ENCODE measurements at regions of chr12 and their contacts with region 1.

Region 1: GRCh38 chr12:45775964-45776363 is 46.5 kb downstream of the ARID2 start:
- DNase-seq: no peak
- H3K4me3 ChIP-seq: no peak overlapping the region
- H3K27ac ChIP-seq: no peak overlapping the region
- H3K4me1 ChIP-seq: no peaks in the 10 kb centered on the region
- CTCF ChIP-seq: no peak

Region 2: GRCh38 chr12:45839917-45840316 is 64.0 kb after region 1 on chr12:
- CTCF ChIA-PET with region 1: no interaction called
- POLR2A ChIA-PET with region 1: no interaction called
- intact Hi-C with region 1: no loop called
- DNase-seq: no peak
- H3K4me3 ChIP-seq: no peak overlapping the region
- H3K27ac ChIP-seq: no peak overlapping the region
- H3K4me1 ChIP-seq: no peaks in the 10 kb centered on the region
- CTCF ChIP-seq: no peak

Region 3: DNA sequence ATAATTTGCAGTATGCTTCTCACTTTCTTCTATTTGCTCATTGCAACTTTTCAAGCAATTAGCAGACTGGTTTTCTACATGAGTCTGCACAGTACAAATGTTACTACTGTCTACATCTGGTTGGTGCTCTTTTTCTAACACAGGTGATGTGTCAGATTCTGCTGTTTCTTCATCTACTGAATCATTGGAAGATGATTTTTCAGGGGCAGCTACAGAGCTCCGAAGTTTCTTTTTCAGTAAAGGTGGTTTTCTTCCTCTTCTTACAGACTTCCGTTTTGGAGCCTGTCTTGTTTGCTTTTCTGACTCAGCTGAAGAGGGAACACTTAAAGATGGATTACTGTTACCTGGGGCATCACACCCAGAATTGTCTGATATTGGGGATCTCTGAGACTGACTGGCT is 152.3 kb after region 1 on chr12:
- CTCF ChIA-PET with region 1: no interaction called
- POLR2A ChIA-PET with region 1: interaction called, 10 read pairs
- intact Hi-C with region 1: no loop called
- DNase-seq: no peak
- H3K4me3 ChIP-seq: no peak overlapping the region
- H3K27ac ChIP-seq: no peak overlapping the region
- H3K4me1 ChIP-seq: no peaks in the 10 kb centered on the region
- CTCF ChIP-seq: no peak